ENCODE measurements at regions of chr10 and their contacts with region 1.

Region 1: DNA sequence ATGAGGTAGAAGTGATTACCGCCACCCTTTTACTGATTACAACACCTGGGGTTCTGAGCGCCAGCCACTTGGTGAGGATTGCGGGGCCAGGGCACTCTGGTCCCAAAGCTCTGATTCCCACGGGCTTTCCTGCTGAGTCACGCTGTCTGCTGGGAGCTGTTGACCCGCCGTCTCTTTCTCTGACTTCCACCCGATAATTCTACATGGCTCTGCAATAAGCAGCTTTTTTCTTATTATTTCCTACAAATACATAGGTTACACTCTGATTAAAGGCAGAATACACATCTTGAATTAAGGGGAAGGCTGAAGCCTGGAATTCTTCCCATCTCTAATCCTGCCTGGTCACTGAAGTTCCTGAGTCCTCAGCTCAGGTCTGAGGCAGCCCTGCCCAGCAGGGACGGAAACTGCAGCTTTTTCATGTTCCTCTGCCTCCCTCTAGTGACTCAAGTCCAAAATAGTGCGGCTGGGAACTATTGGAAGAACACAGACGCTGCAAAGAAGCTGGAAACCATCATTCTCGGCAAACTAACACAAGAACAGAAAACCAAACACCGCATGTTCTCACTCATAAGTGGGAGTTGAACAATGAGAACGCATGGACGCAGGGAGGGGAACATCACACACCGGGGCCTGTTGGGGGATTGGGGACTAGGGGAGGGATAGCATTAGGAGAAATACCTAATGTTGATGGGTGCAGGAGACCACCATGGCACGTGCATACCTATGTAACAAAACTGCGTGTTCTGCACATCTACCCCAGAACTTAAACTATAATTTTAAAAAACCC is 178.3 kb downstream of the PRKCQ start:
- DNase-seq: peak; percentile 85
- CTCF ChIP-seq: peak; percentile 88

Region 2: DNA sequence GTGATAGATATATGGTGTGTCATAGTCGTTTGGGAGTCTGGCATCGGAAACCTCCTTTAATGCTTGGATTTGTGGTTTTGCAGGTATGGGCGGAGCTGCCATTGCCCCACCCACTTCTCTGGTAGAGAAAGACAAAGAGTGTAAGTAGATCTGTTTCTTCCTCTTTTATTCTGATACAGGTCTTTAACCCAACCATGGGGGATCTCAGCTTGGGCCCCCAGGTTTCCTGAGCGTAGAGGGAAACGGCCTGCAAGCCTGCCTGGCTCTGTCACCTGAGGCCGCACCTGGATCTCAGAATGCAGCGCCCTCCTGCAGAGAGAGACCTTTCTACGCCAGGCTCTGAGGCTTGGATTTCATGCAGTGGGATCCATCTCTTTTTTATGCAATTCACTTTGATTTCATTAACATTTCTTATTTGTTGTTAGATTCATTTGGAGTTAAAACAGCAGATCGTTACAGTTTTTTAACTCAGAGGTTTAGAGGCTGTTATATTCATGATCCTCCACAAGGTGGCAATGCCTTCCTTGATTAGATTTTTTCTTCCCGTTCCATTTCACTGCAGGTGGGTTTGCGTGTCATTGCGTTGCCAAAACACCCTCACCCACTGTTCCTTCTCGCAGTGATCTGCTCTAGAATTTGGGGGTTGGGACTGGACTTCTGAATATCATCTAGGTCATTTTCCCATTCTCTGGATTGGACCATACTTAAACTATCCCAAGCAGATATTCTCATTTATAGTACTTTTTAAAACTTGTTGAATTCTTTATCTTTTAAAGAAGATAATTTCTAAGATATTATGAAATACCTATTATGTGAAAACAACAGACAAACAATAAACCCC is 292.9 kb before region 1 on chr10:
- CTCF ChIA-PET with region 1: interaction called, 77 read pairs
- POLR2A ChIA-PET with region 1: no interaction called
- DNase-seq: peak; percentile 58
- CTCF ChIP-seq: peak; percentile 52

Region 3: DNA sequence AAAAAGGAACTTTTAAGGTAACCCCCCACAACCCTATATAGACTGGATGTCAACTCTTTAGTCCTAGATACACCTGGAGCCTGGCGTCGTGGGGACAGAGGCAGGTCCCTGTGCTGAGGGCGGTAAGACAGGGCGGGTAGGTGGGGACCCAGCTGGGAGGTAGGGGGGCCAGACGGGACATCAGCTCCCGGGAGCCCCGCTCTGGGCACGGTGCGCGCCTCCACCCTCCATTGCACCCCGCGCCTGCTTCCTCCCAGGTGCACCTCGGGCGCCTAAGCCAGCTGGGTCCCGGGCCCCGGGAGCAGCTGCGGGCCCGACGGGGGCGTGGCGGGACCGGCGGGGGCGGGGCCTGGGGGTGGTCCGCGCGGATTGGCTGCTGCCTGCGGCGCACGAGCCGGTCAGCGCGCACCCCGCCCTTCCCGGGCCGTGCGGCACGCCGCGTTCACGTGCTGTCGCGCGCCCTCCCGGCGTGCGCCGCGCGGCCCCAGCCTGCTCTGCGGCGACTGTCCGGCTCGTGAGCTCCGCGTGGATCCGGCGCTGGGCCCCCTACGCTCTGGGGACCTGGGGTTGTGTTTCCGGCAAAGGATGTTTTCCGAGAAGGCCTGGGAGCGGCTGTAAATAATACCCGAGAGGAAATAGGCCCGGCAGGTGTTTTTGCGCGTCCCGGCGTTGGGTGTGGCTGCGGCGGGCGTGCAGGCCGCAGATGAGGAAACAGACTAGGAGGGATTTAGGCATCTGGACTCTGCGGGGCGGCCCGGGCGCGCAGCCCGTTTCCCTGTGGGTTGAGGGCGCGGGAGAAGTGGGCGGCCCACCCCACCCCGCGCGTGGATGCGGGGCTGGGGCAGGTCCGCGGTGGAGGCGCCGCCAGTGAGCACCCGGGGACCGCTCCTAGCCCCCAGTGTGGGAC is 238.1 kb before region 1 on chr10:
- CTCF ChIA-PET with region 1: interaction called, 12 read pairs
- POLR2A ChIA-PET with region 1: no interaction called
- DNase-seq: peak; percentile 97
- CTCF ChIP-seq: peak; percentile 13

Region 4: DNA sequence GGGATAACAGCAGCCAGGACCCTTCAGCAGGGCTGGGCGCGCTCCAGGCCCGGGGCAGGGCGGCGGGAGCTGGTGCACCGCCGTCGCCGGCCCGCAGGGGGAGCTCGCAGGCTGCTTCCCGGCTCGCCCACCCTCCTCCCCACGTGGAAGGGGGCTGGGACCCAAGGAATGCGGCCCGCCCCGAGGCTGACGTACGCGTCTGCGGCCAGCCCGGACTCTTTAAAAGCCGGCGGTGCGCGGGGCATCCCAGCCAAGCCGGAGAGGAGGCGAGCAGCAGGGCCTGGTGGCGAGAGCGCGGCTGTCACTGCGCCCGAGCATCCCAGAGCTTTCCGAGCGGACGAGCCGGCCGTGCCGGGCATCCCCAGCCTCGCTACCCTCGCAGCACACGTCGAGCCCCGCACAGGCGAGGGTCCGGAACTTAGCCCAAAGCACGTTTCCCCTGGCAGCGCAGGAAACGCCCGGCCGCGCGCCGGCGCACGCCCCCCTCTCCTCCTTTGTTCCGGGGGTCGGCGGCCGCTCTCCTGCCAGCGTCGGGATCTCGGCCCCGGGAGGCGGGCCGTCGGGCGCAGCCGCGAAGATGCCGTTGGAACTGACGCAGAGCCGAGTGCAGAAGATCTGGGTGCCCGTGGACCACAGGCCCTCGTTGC is 198.9 kb before region 1 on chr10 and contains the start of gene PFKFB3:
- CTCF ChIA-PET with region 1: interaction called, 136 read pairs
- POLR2A ChIA-PET with region 1: interaction called, 42 read pairs
- DNase-seq: peak; percentile 97
- CTCF ChIP-seq: peak; percentile 97

Region 5: DNA sequence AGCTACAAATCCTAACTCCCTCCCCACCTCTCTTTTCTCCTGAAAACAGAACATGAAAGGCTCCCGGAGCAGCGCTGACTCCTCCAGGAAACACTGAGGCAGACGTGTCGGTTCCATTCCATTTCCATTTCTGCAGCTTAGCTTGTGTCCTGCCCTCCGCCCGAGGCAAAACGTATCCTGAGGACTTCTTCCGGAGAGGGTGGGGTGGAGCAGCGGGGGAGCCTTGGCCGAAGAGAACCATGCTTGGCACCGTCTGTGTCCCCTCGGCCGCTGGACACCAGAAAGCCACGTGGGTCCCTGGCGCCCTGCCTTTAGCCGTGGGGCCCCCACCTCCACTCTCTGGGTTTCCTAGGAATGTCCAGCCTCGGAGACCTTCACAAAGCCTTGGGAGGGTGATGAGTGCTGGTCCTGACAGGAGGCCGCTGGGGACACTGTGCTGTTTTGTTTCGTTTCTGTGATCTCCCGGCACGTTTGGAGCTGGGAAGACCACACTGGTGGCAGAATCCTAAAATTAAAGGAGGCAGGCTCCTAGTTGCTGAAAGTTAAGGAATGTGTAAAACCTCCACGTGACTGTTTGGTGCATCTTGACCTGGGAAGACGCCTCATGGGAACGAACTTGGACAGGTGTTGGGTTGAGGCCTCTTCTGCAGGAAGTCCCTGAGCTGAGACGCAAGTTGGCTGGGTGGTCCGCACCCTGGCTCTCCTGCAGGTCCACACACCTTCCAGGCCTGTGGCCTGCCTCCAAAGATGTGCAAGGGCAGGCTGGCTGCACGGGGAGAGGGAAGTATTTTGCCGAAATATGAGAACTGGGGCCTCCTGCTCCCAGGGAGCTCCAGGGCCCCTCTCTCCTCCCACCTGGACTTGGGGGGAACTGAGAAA is 168.7 kb before region 1 on chr10:
- CTCF ChIA-PET with region 1: interaction called, 13 read pairs
- POLR2A ChIA-PET with region 1: no interaction called
- DNase-seq: no peak
- CTCF ChIP-seq: no peak

Region 6: GRCh38 chr10:6348096-6348874 is 53.5 kb before region 1 on chr10:
- CTCF ChIA-PET with region 1: interaction called, 30 read pairs
- POLR2A ChIA-PET with region 1: no interaction called
- DNase-seq: peak; percentile 69
- CTCF ChIP-seq: no peak

Region 7: DNA sequence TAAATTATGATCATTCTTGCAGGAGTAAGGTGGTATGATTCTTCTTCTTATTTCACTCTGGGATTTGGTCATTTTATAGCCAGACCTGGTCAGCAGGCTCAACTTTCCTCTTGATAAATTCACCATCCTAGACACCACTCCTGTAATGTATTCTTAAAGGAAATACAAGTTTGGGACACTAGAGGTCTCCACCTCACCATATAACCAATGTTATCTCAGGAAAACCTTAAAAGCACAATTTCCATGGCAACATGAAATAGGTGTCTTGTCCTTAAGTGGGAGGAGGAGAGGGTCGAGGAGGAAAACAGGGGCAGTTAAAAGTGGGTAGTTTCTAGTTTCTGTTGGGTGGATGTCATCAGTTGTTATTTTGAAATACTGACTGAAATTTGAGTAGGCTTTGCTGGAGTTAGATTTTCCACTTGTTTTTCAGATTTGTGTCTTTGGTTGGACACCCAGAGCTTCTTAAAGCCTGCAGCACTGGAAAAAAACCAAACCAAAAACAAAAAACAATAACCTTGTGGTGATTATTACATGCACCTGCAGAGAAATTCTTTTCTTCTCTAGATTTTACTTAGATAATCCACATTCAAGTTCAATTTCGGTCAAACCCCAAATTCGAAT is 15.2 kb after region 1 on chr10:
- CTCF ChIA-PET with region 1: interaction called, 26 read pairs
- POLR2A ChIA-PET with region 1: no interaction called
- DNase-seq: peak; percentile 47
- CTCF ChIP-seq: peak; percentile 59